Heart left ventricle (tissue), 16 donors: ENCODE measurements at regions of chr14 and their contacts with region 1.

Region 1: DNA sequence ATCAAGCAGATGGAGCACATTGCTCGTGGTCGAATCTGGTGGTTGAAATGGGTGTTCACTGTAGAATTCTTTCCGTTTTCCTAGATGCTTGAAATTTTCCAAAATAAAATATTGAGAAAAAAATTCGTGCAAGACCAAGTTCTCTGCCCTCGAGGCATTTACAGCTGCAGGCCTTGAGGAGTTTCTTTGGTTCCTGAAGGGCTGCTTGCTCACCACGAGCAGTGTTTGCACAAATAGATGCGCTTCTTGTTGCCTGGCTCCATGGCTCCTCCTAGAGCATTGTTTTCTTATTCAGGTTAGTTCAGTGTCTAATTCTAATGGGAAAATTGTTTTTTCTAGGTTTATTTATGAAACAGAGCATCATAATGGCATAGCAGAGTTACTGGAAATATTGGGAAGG is 74.5 kb upstream of the DYNC1H1 start:
- DNase-seq: no peak
- ATAC-seq: no peak
- H3K4me3 ChIP-seq: no peak overlapping the region
- H3K27ac ChIP-seq: no peak overlapping the region
- H3K4me1 ChIP-seq: peaks cover 0 to 4% (median 0%) of the 10 kb centered on the region in 12 donors
- H3K27me3 ChIP-seq: no peaks in the 10 kb centered on the region
- CTCF ChIP-seq: peak in 3 of 12 donors; percentile 9 to 43 (median 24)
- POLR2A ChIP-seq: no peak

Region 2: GRCh38 chr14:101595887-101596721 is 293.8 kb before region 1 on chr14:
- intact Hi-C with region 1: no loop called
- DNase-seq: no peak
- ATAC-seq: no peak
- H3K4me3 ChIP-seq: no peak overlapping the region
- H3K27ac ChIP-seq: no peak overlapping the region
- H3K4me1 ChIP-seq: peaks cover 0 to 7% (median 0%) of the 10 kb centered on the region in 12 donors
- H3K27me3 ChIP-seq: no peaks in the 10 kb centered on the region
- CTCF ChIP-seq: no peak
- POLR2A ChIP-seq: no peak

Region 3: GRCh38 chr14:101781240-101782061 is 108.4 kb before region 1 on chr14:
- intact Hi-C with region 1: loop called in 5 of 10 experiments (anchors 5 to 10 kb)
- DNase-seq: peak in 2 of 5 donors; percentile 49 to 68
- ATAC-seq: peak in 3 of 4 donors; percentile 65 to 76 (median 69)
- H3K4me3 ChIP-seq: peak overlapping the region; percentile 47 to 78 (median 62)
- H3K27ac ChIP-seq: peak overlapping the region in 9 of 12 donors; percentile 6 to 80 (median 57)
- H3K4me1 ChIP-seq: peaks cover 0 to 44% (median 14%) of the 10 kb centered on the region in 12 donors
- H3K27me3 ChIP-seq: peaks cover 0 to 14% (median 0%) of the 10 kb centered on the region in 9 donors
- CTCF ChIP-seq: peak in 1 of 12 donors; percentile 12
- POLR2A ChIP-seq: no peak

Region 4: GRCh38 chr14:101788016-101788635 is 101.8 kb before region 1 on chr14:
- intact Hi-C with region 1: loop called in 2 of 10 experiments (anchors 5 to 10 kb)
- DNase-seq: no peak
- ATAC-seq: peak in 1 of 4 donors; percentile 13
- H3K4me3 ChIP-seq: no peak overlapping the region
- H3K27ac ChIP-seq: peak overlapping the region in 1 of 12 donors; percentile 2
- H3K4me1 ChIP-seq: peaks cover 0 to 31% (median 13%) of the 10 kb centered on the region in 12 donors
- H3K27me3 ChIP-seq: no peaks in the 10 kb centered on the region
- CTCF ChIP-seq: no peak
- POLR2A ChIP-seq: no peak

Region 5: DNA sequence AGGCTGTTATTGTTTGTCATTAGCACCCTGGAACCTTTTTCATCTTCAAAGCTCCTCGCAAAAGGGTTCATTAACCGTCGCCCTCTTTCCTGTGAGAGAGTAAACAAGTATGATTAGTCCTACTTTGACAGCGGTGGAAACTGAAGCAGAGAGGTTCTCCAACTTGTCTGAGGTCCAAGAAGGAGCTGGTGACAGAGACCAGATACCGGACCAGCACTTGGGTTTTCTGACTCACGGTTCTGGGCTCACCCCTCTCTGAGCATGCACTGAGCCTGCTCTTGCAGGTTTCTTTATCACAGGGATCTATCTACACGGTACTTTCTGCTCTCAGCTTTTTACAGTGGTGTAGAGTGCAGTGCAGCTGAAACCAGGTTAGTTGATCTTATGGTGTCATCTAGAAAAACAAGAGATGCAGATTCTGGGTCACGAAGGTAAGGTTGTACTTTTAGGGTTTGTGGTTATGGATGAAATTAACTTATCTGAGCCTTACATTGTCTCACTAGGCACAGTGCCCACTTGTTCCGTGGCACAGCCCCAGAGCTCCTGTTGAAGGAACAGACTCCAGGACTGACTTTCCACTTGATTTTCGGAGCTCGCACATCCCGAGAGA is 66.3 kb before region 1 on chr14:
- intact Hi-C with region 1: loop called in 1 of 10 experiments (anchors 10 kb)
- DNase-seq: peak in 1 of 5 donors; percentile 72
- ATAC-seq: peak; percentile 36 to 90 (median 66)
- H3K4me3 ChIP-seq: peak overlapping the region in 9 of 12 donors; percentile 3 to 50 (median 18)
- H3K27ac ChIP-seq: peak overlapping the region; percentile 46 to 97 (median 76)
- H3K4me1 ChIP-seq: peaks cover 0 to 94% (median 41%) of the 10 kb centered on the region in 12 donors
- H3K27me3 ChIP-seq: no peaks in the 10 kb centered on the region
- CTCF ChIP-seq: no peak
- POLR2A ChIP-seq: no peak

Region 6: GRCh38 chr14:102020058-102020971 is 130.4 kb after region 1 on chr14:
- intact Hi-C with region 1: no loop called
- DNase-seq: no peak
- ATAC-seq: no peak
- H3K4me3 ChIP-seq: no peak overlapping the region
- H3K27ac ChIP-seq: no peak overlapping the region
- H3K4me1 ChIP-seq: no peaks in the 10 kb centered on the region
- H3K27me3 ChIP-seq: no peaks in the 10 kb centered on the region
- CTCF ChIP-seq: no peak
- POLR2A ChIP-seq: no peak

Region 7: DNA sequence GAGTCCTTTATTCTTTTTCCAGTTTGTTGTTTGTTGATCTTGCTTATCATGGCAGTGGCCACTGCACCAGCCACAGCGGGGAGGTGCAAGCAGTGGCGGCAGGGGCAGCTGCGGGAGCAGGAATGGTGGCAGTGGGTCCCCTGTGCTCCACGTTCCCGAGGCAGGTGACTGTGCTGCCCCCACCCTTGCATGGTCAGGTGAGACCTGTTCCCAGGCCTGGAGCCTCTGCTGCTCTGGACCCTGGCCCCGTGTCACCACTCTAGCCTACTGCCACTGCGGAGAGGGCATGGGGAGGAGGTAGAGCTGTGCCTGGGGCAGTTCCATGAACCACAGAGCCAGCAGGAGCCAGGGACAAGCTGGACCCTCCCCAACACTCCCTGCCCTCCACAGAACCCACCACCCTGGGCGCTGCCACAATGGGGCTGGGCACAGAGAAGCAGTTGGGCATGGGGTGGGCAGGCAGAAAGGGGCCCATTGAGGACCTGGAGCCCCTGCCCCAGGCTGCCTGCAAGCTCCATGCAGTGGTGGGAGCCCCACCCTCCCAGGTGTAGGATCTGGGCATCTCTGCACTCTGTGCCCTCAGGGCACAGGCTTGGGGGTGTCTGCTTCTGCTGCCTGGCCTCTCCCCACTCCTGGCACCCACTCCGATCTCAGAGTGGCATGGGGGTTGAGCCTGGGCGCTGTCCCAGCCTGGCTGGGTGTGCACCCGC is 226.6 kb after region 1 on chr14:
- intact Hi-C with region 1: no loop called
- DNase-seq: no peak
- ATAC-seq: no peak
- H3K4me3 ChIP-seq: no peak overlapping the region
- H3K27ac ChIP-seq: no peak overlapping the region
- H3K4me1 ChIP-seq: no peaks in the 10 kb centered on the region
- H3K27me3 ChIP-seq: no peaks in the 10 kb centered on the region
- CTCF ChIP-seq: no peak
- POLR2A ChIP-seq: no peak